Right lobe of liver (tissue), 6 donors: ENCODE measurements at regions of chr1 and their contacts with region 1.

Region 1: GRCh38 chr1:27662707-27663393 is 9.1 kb downstream of the IFI6 start:
- DNase-seq: peak; percentile 64 to 78 (median 73)
- ATAC-seq: peak; percentile 84 to 86 (median 85)
- H3K4me3 ChIP-seq: no peak overlapping the region
- H3K27ac ChIP-seq: peak overlapping the region in 1 of 3 donors; percentile 32
- H3K4me1 ChIP-seq: no peaks in the 10 kb centered on the region
- H3K27me3 ChIP-seq: no peaks in the 10 kb centered on the region
- CTCF ChIP-seq: peak; percentile 84 to 94 (median 86)
- POLR2A ChIP-seq: no peak

Region 2: DNA sequence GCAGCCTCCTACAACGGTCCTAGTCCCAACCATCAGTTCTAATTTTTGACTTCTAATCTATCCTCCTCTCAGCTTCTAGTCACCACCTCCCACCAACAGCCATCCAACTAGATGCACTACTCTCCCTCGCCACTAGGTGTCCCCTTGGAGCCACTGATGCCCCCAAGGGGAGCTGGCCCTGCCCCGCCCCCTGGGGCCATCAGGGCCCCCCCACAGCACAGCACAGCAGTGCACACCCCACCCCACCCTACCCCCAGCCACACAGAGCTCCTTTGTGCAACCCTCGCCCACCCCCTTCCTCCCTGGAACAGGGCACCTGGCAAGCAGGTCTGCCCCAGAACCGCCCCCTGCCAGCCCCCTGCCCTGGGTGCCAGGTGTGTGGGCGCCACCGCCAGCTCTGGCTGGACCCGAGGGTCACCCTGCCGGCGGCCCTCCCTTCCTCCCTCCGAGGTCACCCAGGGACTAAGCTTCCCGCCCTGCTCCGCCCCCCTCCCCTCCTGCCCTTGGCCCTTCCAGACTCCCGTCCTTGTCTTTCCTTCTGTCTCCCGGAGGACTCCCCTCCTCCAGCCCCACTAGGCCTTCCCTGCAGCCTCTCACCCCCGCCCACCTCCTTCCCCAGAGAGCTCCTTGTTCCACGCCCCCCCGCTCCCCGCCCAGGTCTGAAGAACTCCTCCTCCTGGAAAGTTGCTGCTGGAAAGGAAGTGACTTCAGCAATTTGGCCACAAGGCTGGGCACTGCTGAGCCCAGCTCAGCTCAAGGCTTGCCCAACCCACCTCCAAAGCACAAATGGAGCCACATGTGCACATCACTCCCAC is 105.9 kb before region 1 on chr1:
- intact Hi-C with region 1: loop called in 1 of 2 experiments (anchors 10 kb)
- DNase-seq: peak; percentile 81 to 88 (median 86)
- ATAC-seq: peak; percentile 72 to 84 (median 74)
- H3K4me3 ChIP-seq: peak overlapping the region in 1 of 3 donors; percentile 31
- H3K27ac ChIP-seq: peak overlapping the region; percentile 6 to 63 (median 43)
- H3K4me1 ChIP-seq: peaks cover 0 to 28% (median 2%) of the 10 kb centered on the region in 4 donors
- H3K27me3 ChIP-seq: no peaks in the 10 kb centered on the region
- CTCF ChIP-seq: peak; percentile 80 to 96 (median 92)
- POLR2A ChIP-seq: peak; percentile 17

Region 3: DNA sequence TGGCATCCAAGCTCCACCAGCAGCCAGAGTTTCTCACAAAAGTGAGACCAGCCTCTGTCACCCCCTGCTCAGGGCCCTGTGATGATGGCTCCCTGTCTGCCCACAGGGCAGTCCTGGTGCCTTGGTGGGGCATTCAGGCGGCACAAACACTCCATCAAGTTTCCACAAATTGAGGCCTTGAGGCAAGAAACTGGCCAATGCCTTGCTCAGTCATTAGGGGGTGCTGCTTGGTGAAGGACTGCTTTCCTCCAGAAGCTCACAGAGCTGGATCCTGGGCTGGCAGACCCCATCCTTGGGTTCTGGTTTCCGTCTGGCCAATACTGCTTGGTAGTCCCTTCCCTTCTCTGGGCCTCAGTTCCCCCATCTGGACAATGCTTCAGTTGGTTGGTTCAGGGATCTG is 46.4 kb before region 1 on chr1:
- intact Hi-C with region 1: loop called in 1 of 2 experiments (anchors 5 kb)
- DNase-seq: no peak
- ATAC-seq: no peak
- H3K4me3 ChIP-seq: no peak overlapping the region
- H3K27ac ChIP-seq: no peak overlapping the region
- H3K4me1 ChIP-seq: no peaks in the 10 kb centered on the region
- H3K27me3 ChIP-seq: no peaks in the 10 kb centered on the region
- CTCF ChIP-seq: no peak
- POLR2A ChIP-seq: no peak

Region 4: GRCh38 chr1:27713139-27713725 is 50.4 kb after region 1 on chr1:
- intact Hi-C with region 1: no loop called
- DNase-seq: no peak
- ATAC-seq: no peak
- H3K4me3 ChIP-seq: no peak overlapping the region
- H3K27ac ChIP-seq: no peak overlapping the region
- H3K4me1 ChIP-seq: peaks cover 0 to 6% (median 0%) of the 10 kb centered on the region in 4 donors
- H3K27me3 ChIP-seq: no peaks in the 10 kb centered on the region
- CTCF ChIP-seq: no peak
- POLR2A ChIP-seq: no peak

Region 5: DNA sequence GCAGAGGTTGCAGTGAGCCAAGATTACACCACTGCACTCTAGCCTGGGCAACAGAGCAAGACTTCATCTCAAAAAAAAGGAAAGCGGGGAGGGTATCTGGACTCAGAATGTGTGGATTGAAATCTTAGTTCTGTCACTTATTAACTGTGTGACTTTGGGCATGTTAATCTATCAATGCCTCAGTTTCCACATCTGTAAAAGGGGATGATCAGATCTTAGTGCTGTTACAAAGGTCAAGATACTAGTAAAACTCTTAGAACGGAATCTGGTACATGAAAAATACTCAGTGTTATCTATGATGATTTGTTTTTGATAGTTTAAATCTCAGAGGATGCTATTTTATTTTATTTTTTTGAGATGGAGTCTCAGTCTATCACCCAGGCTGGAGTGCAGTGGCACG is 73.4 kb after region 1 on chr1:
- intact Hi-C with region 1: no loop called
- DNase-seq: no peak
- ATAC-seq: no peak
- H3K4me3 ChIP-seq: no peak overlapping the region
- H3K27ac ChIP-seq: no peak overlapping the region
- H3K4me1 ChIP-seq: no peaks in the 10 kb centered on the region
- H3K27me3 ChIP-seq: no peaks in the 10 kb centered on the region
- CTCF ChIP-seq: no peak
- POLR2A ChIP-seq: no peak